ENCODE measurements at regions of chr16 and their contacts with region 1.

Region 1: GRCh38 chr16:3264137-3265036 is 8.0 kb upstream of the MEFV start:
- DNase-seq: peak; percentile 98 to 99
- H3K4me3 ChIP-seq: peak overlapping the region; percentile 68
- H3K4me3 Mint-ChIP-seq: peak overlapping the region; percentile 98
- H3K27ac Mint-ChIP-seq: peak overlapping the region; percentile 97
- H3K4me1 ChIP-seq: 0 out of 2 replicates have a peak, but pooled peaks cover 3% of the 10 kb centered on the region
- H3K4me1 Mint-ChIP-seq: no peaks in the 10 kb centered on the region
- H3K27me3 ChIP-seq: no peaks in the 10 kb centered on the region
- H3K27me3 Mint-ChIP-seq: no peaks in the 10 kb centered on the region
- CTCF ChIP-seq: peak in 1 of 2 experiments; percentile 20

Region 2: GRCh38 chr16:2980227-2981086 is 283.9 kb before region 1 on chr16 and contains the start of gene PKMYT1:
- CTCF ChIA-PET with region 1: no interaction called
- POLR2A ChIA-PET with region 1: no interaction called
- intact Hi-C with region 1: no loop called
- DNase-seq: peak; percentile 87 to 95
- H3K4me3 ChIP-seq: peak within 1 kb of the TSS; percentile 82
- H3K4me3 Mint-ChIP-seq: peak within 1 kb of the TSS; percentile 91
- H3K27ac Mint-ChIP-seq: peak within 1 kb of the TSS; percentile 80
- H3K4me1 ChIP-seq: peaks cover 16% of the 10 kb centered on the region
- H3K4me1 Mint-ChIP-seq: no peaks in the 10 kb centered on the region
- H3K27me3 ChIP-seq: no peaks in the 10 kb centered on the region
- H3K27me3 Mint-ChIP-seq: no peaks in the 10 kb centered on the region
- CTCF ChIP-seq: no peak
- total RNA-seq, gene PKMYT1: 63.3 and 73.7 TPM in 2 replicates

Region 3: GRCh38 chr16:3234543-3235541 is 29.5 kb before region 1 on chr16 and contains the start of gene ZNF200:
- CTCF ChIA-PET with region 1: no interaction called
- POLR2A ChIA-PET with region 1: no interaction called
- intact Hi-C with region 1: loop called (anchors 2 kb)
- DNase-seq: peak; percentile 93 to 94
- H3K4me3 ChIP-seq: peak within 1 kb of the TSS; percentile 96
- H3K4me3 Mint-ChIP-seq: peak within 1 kb of the TSS; percentile 83
- H3K27ac Mint-ChIP-seq: peak within 1 kb of the TSS; percentile 93
- H3K4me1 ChIP-seq: 0 out of 2 replicates have a peak, but pooled peaks cover 4% of the 10 kb centered on the region
- H3K4me1 Mint-ChIP-seq: no peaks in the 10 kb centered on the region
- H3K27me3 ChIP-seq: no peaks in the 10 kb centered on the region
- H3K27me3 Mint-ChIP-seq: no peaks in the 10 kb centered on the region
- CTCF ChIP-seq: no peak
- total RNA-seq, gene ZNF200: 11.3 and 12.1 TPM in 2 replicates

Region 4: DNA sequence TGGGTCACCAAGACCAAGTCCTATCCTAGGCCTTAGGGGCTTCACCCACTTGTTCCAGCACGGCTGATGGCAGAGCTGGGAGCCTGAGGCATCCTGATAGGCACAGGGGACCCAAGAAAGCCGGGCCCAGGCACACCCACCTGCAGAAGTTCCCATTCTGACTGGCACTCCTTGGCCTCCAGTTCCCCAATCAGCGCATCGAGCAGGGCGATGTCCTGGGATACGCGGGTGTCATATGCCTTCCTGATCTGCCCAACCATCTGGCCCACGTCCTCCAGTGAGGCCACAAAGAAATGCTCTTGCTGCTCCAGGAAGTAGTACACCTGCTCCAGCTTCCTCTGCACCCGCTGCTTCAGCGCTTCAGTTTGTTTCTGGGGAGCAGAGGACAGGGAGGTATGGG is 17.5 kb before region 1 on chr16:
- CTCF ChIA-PET with region 1: no interaction called
- POLR2A ChIA-PET with region 1: no interaction called
- intact Hi-C with region 1: no loop called
- DNase-seq: no peak
- H3K4me3 ChIP-seq: no peak overlapping the region
- H3K4me3 Mint-ChIP-seq: no peak overlapping the region
- H3K27ac Mint-ChIP-seq: no peak overlapping the region
- H3K4me1 ChIP-seq: no peaks in the 10 kb centered on the region
- H3K4me1 Mint-ChIP-seq: no peaks in the 10 kb centered on the region
- H3K27me3 ChIP-seq: no peaks in the 10 kb centered on the region; the same call in 1 of the 2 replicates
- H3K27me3 Mint-ChIP-seq: peaks cover 3% of the 10 kb centered on the region
- CTCF ChIP-seq: no peak

Region 5: GRCh38 chr16:3282730-3283524 is 18.5 kb after region 1 on chr16 and contains the start of gene ZNF263:
- CTCF ChIA-PET with region 1: interaction called, 8 read pairs
- POLR2A ChIA-PET with region 1: interaction called, 21 read pairs
- intact Hi-C with region 1: loop called (anchors 1 kb)
- DNase-seq: peak; percentile 96
- H3K4me3 ChIP-seq: peak within 1 kb of the TSS; percentile 72
- H3K4me3 Mint-ChIP-seq: peak within 1 kb of the TSS; percentile 98
- H3K27ac Mint-ChIP-seq: peak within 1 kb of the TSS; percentile 99
- H3K4me1 ChIP-seq: peaks cover 19% of the 10 kb centered on the region
- H3K4me1 Mint-ChIP-seq: no peaks in the 10 kb centered on the region
- H3K27me3 ChIP-seq: no peaks in the 10 kb centered on the region
- H3K27me3 Mint-ChIP-seq: no peaks in the 10 kb centered on the region
- CTCF ChIP-seq: no peak
- total RNA-seq, gene ZNF263: 37.0 and 37.4 TPM in 2 replicates

Region 6: DNA sequence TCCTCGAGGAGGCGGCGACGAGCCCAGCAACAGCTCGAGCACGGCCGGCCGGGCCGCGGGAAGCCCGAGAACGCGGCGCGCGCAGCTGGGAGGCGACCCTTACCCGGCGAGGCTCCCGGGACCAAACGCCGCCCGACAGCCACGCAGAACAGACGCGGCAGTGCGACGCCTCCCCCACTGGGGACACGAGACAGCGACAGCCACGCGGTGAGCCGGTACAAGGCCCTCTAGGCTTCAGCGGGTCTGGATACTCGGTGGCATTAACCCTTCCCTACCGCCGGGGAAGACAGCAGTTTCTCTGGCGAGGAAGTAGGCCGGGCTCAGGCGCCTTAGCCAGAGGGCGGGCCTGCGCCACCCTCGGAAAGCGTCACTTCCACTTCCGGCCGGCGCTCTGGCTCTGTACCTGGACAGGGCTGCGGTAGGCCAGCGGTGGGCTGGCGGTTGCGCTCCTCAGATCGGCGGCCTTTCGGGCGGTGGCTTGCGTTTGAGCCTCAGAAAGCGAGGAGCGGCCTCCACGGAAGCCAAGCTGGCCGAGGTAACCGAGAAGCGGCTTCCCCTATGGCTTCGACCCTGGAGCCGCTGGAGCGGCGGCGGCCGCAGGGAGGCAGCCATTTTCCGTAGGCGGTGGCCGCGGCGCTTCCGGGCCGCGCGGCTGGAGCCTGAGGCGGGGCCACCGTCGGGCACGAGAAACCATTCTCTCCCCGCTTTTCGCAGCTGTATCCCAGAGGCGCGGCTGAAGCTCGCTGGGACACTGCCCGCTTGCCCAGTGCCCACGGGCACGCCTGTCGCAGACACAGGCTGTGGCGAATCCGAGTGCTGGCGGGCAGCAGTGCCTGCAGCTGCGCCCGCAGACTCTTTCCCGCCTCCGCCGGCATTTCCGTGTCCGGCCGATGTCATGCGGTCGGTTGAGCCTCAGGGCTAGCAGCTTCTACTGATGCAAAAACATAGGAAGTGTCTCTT is 41.0 kb after region 1 on chr16 and contains the starts of genes TIGD7 and ZNF75A:
- CTCF ChIA-PET with region 1: interaction called, 4 read pairs
- POLR2A ChIA-PET with region 1: interaction called, 3 read pairs
- intact Hi-C with region 1: loop called (anchors 1 kb)
- DNase-seq: peak; percentile 83 to 86
- H3K4me3 ChIP-seq: peak within 1 kb of the TSS; percentile 73
- H3K4me3 Mint-ChIP-seq: peak within 1 kb of the TSS; percentile 68
- H3K27ac Mint-ChIP-seq: peak within 1 kb of the TSS; percentile 32
- H3K4me1 ChIP-seq: no peaks in the 10 kb centered on the region
- H3K4me1 Mint-ChIP-seq: no peaks in the 10 kb centered on the region
- H3K27me3 ChIP-seq: no peaks in the 10 kb centered on the region
- H3K27me3 Mint-ChIP-seq: no peaks in the 10 kb centered on the region
- CTCF ChIP-seq: no peak
- total RNA-seq, gene TIGD7: 3.7 and 5.2 TPM in 2 replicates
- total RNA-seq, gene ZNF75A: 28.4 and 29.1 TPM in 2 replicates

Region 7: DNA sequence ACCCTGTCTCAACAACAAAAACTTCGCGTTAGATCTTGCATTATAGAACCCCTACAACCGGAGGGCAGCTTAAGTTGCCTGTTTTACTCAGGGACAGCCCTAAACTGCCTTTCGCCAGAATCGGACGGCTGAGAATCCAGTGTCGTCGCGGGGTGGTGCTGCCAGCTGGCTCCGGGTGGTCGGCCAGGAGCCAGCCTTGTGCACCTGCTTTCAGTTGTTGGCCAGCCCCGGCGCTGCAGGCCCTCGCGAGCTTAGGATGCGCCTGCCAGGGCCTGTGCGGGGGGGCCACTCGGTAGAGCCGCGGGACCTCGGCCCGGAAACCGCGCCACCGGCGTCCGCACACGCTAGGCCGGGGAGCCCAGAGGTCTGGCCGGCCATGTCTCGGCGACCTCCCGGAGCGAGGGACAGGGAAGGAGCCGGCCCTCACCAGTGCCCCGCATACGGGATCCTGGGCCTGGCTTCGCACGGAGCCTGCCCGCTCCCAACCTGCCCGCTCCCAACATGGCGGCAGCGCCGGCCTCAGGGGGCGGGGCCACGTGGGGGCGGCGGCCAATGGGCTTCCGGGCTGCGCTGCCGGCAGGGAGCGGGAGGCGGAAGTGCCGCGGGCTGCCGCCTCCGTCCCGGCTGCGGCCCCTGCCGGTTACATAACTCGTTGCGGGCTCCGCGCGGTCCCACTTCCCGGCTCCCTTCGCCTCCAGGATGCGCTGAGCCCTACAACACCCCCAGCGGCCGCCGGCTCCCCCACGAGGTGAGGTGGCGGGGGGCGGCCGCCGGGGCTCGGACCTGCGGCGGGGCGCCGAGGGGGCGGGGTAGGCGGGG is 193.3 kb after region 1 on chr16:
- CTCF ChIA-PET with region 1: no interaction called
- POLR2A ChIA-PET with region 1: interaction called, 6 read pairs
- intact Hi-C with region 1: loop called (anchors 5 kb)
- DNase-seq: peak; percentile 86 to 95
- H3K4me3 ChIP-seq: peak overlapping the region; percentile 98
- H3K4me3 Mint-ChIP-seq: peak overlapping the region; percentile 76
- H3K27ac Mint-ChIP-seq: peak overlapping the region; percentile 82
- H3K4me1 ChIP-seq: peaks cover 17% of the 10 kb centered on the region
- H3K4me1 Mint-ChIP-seq: peaks cover 37% of the 10 kb centered on the region
- H3K27me3 ChIP-seq: no peaks in the 10 kb centered on the region
- H3K27me3 Mint-ChIP-seq: no peaks in the 10 kb centered on the region
- CTCF ChIP-seq: peak in 1 of 2 experiments; percentile 54

Measured in Caco-2 (cell line).